Activated T-helper 2 cell treated with anti-CD3 and anti-CD28 coated beads, Interferon-gamma antibody, Interleukin-2, Interleukin-4, amounts not matched to agents 10 μg/mL and 5 μg/mL and 100 μg/mL, durations not matched to agents 14 hours and 24 hours and 36 hours (primary cell): ENCODE measurements at regions of chr1 and their contacts with region 1.

Region 1: DNA sequence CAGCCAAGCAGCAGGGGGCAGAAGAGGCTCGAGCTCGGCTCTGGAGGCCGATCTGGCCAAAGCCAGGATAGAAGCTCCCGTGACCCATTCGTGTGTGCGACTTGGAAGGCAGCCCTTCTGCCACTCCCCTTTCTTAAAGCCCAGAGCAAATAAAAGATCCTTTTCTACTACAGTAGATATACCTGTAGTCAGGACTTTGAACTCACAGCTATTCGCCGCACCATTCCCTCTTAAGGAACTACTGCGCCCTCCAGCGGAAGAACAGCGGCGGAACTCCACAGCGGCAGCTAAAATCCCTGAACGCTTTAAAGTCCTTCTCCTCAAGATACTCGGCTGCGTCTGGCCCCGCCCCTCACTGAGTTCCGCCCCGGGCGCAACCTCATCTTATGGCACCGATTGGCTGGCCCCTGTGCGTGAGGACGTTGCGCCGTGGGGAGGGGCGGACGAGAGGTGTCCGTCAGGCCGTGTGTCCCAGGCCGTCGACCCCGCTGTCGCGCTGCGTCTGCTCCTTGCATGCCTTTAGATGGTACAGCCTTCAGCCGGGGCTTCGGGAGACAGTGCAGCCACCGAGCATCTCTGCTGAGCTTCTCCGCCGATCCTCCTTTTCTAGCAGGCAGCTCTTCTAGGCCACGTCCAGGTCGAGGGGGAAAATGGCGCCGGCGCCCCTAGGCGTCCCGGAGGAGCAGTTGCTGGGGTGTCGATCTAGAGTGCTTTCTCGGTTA is at the start of gene LRIG2:
- DNase-seq: peak; percentile 97
- H3K4me3 Mint-ChIP-seq: peak within 1 kb of the TSS; percentile 89
- H3K27ac Mint-ChIP-seq: peak within 1 kb of the TSS; percentile 75
- H3K4me1 Mint-ChIP-seq: peaks cover 18% of the 10 kb centered on the region
- H3K27me3 Mint-ChIP-seq: no peaks in the 10 kb centered on the region
- total RNA-seq, gene LRIG2: 12.3 and 14.5 TPM in 2 replicates

Region 2: GRCh38 chr1:112619520-112620376 is 453.2 kb before region 1 on chr1 and contains the start of gene CAPZA1:
- intact Hi-C with region 1: loop called (anchors 5 kb)
- DNase-seq: peak; percentile 90
- H3K4me3 Mint-ChIP-seq: peak within 1 kb of the TSS; percentile 99
- H3K27ac Mint-ChIP-seq: peak within 1 kb of the TSS; percentile 99
- H3K4me1 Mint-ChIP-seq: peaks cover 25% of the 10 kb centered on the region
- H3K27me3 Mint-ChIP-seq: no peaks in the 10 kb centered on the region
- total RNA-seq, gene CAPZA1: 260 and 269 TPM in 2 replicates

Region 3: GRCh38 chr1:112722601-112723510 is 350.1 kb before region 1 on chr1:
- intact Hi-C with region 1: no loop called
- DNase-seq: no peak
- H3K4me3 Mint-ChIP-seq: no peak overlapping the region
- H3K27ac Mint-ChIP-seq: no peak overlapping the region
- H3K4me1 Mint-ChIP-seq: peaks cover 8% of the 10 kb centered on the region
- H3K27me3 Mint-ChIP-seq: peaks cover 20% of the 10 kb centered on the region

Region 4: GRCh38 chr1:112809253-112809684 is 263.6 kb before region 1 on chr1:
- intact Hi-C with region 1: loop called (anchors 2 kb)
- DNase-seq: peak; percentile 54
- H3K4me3 Mint-ChIP-seq: no peak overlapping the region
- H3K27ac Mint-ChIP-seq: no peak overlapping the region
- H3K4me1 Mint-ChIP-seq: no peaks in the 10 kb centered on the region
- H3K27me3 Mint-ChIP-seq: peaks cover 21% of the 10 kb centered on the region

Region 5: GRCh38 chr1:112955781-112956543 is 117.0 kb before region 1 on chr1 and contains the start of gene SLC16A1:
- intact Hi-C with region 1: loop called (anchors 2 kb)
- DNase-seq: peak; percentile 88
- H3K4me3 Mint-ChIP-seq: peak within 1 kb of the TSS; percentile 100
- H3K27ac Mint-ChIP-seq: peak within 1 kb of the TSS; percentile 100
- H3K4me1 Mint-ChIP-seq: peaks cover 56% of the 10 kb centered on the region
- H3K27me3 Mint-ChIP-seq: no peaks in the 10 kb centered on the region
- total RNA-seq, gene SLC16A1: 75.8 and 77.1 TPM in 2 replicates

Region 6: DNA sequence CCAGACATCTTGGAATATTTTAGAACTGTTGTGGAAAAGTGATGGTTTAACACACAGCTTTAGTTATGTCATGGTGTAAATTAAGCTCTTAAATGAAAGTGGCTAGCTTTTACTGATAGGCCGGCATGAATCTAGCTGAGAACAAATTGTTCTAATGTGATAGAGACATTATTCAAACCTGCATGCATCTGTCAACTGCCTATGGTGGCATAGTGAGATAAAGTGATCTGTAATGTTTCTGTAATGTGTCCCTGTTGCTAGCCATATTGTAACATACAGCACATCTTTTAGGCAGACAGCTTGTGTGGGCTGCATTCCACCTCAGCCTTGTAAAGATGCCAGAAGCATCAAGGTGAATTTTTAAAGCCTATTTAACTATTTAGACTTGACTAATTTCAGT is 16.1 kb after region 1 on chr1:
- intact Hi-C with region 1: no loop called
- DNase-seq: no peak
- H3K4me3 Mint-ChIP-seq: no peak overlapping the region
- H3K27ac Mint-ChIP-seq: no peak overlapping the region
- H3K4me1 Mint-ChIP-seq: peaks cover 17% of the 10 kb centered on the region
- H3K27me3 Mint-ChIP-seq: no peaks in the 10 kb centered on the region

Region 7: DNA sequence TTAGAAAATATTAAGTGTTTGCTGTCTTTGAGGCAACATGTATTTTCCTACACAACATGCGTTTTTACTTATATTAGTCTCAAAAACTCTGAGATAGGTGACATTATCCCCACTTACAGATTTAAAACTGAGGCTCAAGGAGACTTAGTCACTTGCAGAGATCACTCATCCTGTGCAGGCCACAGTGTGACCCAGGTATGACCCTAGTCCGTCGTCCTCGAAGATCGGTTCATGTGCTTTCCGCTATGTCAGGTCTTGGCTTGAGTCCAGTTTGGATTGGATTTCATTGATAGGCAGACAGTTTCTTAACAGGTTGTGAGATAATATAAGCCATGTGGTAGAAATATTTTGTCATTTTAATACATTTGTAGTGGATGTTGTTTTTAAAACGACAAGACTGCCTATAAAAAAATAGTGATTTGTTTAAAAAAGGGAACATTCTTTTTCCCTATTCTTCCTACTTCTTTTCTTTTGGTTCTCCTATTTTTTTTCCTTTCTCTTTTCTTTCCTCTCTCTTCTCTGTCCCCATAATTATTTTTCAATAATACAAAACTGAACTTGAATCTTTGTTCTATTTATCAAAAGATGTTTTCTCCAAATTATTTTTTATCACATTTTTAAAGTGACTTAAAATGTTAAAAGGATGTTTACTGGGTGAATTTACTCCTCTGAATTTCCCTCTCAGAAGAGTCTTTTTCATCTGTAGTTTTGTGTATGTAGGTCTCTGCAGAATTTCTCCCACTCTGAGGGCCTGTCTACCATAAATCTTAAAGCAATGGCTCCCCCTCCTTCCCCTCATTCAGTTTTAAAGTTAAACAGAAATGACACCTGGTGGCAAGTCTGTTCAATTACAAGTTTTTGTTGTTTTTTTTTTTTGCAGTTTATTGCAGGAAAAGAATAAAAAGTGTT is 604.6 kb after region 1 on chr1:
- intact Hi-C with region 1: loop called (anchors 2 kb)
- DNase-seq: no peak
- H3K4me3 Mint-ChIP-seq: no peak overlapping the region
- H3K27ac Mint-ChIP-seq: no peak overlapping the region
- H3K4me1 Mint-ChIP-seq: peaks cover 15% of the 10 kb centered on the region
- H3K27me3 Mint-ChIP-seq: peaks cover 2% of the 10 kb centered on the region